ENCODE measurements at regions of chr14 and their contacts with region 1.

Region 1: GRCh38 chr14:75132382-75133086 is 5.7 kb upstream of the NEK9 start:
- DNase-seq: peak; percentile 75
- H3K4me3 ChIP-seq: no peak overlapping the region
- H3K27ac ChIP-seq: peak overlapping the region; percentile 9 to 43
- H3K4me1 ChIP-seq: peaks cover 12% of the 10 kb centered on the region
- H3K27me3 ChIP-seq: no peaks in the 10 kb centered on the region
- CTCF ChIP-seq: peak; percentile 71 to 93 (median 91)
- POLR2A ChIP-seq: no peak

Region 2: DNA sequence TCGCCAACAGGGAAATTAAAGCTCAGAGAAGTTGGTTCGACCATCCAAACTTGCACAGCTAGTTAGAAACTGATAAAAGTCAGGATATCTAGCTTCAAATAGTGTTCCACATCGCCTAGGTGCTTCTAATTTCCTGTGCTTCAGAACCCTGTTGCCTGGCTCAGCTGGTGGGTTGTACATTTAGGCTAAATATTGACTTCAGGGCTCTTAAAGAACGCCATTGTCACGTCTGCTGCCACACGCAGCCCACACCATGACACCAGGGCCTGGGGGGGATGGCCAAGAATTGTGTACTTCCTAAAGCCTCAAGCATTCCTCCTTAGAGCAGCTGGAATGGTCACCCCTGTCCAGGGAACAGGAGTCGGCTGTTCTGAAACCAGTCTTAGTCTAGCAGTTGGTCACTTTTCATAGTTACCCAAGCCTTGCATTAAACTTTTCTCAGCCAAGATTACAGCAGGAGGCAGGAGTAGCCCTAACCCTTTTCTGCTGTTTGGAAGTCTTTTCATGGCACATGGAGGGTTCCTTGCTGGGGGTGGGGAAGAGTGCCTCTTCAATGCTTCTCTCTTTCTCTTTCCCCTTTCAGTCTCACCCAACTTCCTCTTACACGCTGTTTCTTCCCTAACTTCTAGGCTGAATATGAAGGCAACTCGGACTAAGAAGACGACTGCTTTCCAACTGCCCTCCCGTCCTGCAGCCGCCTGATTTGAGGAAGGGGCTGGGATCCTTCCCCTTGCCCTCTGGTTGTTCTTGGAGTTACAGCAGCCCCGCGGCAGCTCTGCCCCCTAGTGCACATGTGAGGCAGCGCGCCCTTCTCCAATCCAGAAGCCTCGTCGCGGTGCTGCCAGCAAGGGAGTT is 163.2 kb after region 1 on chr14:
- intact Hi-C with region 1: loop called (anchors 5 kb)
- DNase-seq: peak; percentile 94
- H3K4me3 ChIP-seq: peak overlapping the region; percentile 66 to 69
- H3K27ac ChIP-seq: peak overlapping the region; percentile 91 to 93
- H3K4me1 ChIP-seq: peaks cover 32% of the 10 kb centered on the region
- H3K27me3 ChIP-seq: no peaks in the 10 kb centered on the region
- CTCF ChIP-seq: peak; percentile 94 to 98 (median 95)
- POLR2A ChIP-seq: no peak

Measured in testis (tissue), 5 donors.